Stomach (tissue), 19 donors: ENCODE measurements at regions of chr3 and their contacts with region 1.

Region 1: DNA sequence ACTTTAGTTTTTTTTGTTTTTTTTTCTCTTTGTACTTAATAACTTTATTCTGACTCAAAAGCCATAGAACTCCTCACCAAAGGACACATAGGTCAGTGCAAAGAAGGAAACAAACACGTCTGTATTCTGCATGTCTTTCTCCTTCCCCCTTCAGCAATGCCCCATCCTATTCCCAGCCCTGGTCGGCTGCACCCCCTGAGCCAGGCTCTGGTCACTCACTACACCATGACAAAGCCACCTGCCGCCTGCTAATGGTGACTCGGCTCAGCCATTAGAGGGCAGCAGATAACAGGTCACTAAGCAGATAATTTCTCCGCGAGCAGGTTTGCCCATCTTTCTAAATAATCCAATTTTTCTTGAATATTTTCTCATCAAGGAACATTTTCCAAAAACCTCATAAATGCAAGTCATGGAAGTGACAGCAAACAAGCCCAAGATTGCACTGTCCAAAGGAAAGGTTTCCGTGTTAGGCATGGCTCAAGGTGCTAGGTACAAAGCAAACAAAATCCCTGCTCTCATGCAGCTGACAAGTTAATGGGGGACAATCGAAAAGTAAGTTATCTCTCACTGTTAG is 37.8 kb downstream of the TM4SF4 start:
- DNase-seq: peak; percentile 67 to 88
- H3K4me3 ChIP-seq: no peak overlapping the region
- H3K27ac ChIP-seq: no peak overlapping the region
- H3K4me1 ChIP-seq: peaks cover 7 to 44% (median 17%) of the 10 kb centered on the region in 4 donors
- H3K27me3 ChIP-seq: no peaks in the 10 kb centered on the region
- CTCF ChIP-seq: peak in 5 of 7 experiments; percentile 41 to 79 (median 75)
- EP300 ChIP-seq: no peak
- POLR2A ChIP-seq: no peak

Region 2: GRCh38 chr3:149717391-149718056 is 205.2 kb after region 1 on chr3:
- intact Hi-C with region 1: loop called (anchors 5 kb)
- DNase-seq: peak; percentile 45 to 86
- H3K4me3 ChIP-seq: peak overlapping the region; percentile 5 to 36 (median 16)
- H3K27ac ChIP-seq: no peak overlapping the region
- H3K4me1 ChIP-seq: peaks cover 0 to 9% (median 4%) of the 10 kb centered on the region in 4 donors
- H3K27me3 ChIP-seq: no peaks in the 10 kb centered on the region
- CTCF ChIP-seq: peak in 5 of 7 experiments; percentile 56 to 92 (median 75)
- EP300 ChIP-seq: no peak
- POLR2A ChIP-seq: no peak